Heart left ventricle (tissue), 16 donors: ENCODE measurements at regions of chr1 and their contacts with region 1.

Region 1: GRCh38 chr1:193791746-193792145 is 605.3 kb upstream of the B3GALT2 start:
- DNase-seq: no peak
- ATAC-seq: no peak
- H3K4me3 ChIP-seq: no peak overlapping the region
- H3K27ac ChIP-seq: no peak overlapping the region
- H3K4me1 ChIP-seq: no peaks in the 10 kb centered on the region
- H3K27me3 ChIP-seq: no peaks in the 10 kb centered on the region
- CTCF ChIP-seq: no peak
- POLR2A ChIP-seq: no peak

Region 2: GRCh38 chr1:193831465-193831864 is 39.7 kb after region 1 on chr1:
- intact Hi-C with region 1: loop called in 1 of 10 experiments (anchors 2 kb)
- DNase-seq: no peak
- ATAC-seq: no peak
- H3K4me3 ChIP-seq: no peak overlapping the region
- H3K27ac ChIP-seq: no peak overlapping the region
- H3K4me1 ChIP-seq: no peaks in the 10 kb centered on the region
- H3K27me3 ChIP-seq: no peaks in the 10 kb centered on the region
- CTCF ChIP-seq: no peak
- POLR2A ChIP-seq: no peak